MCF 10A (cell line): ENCODE measurements at regions of chr19 and their contacts with region 1.

Region 1: GRCh38 chr19:39778763-39779162 is at the start of gene LEUTX:
- DNase-seq: no peak
- H3K4me3 Mint-ChIP-seq: no peak within 1 kb of the TSS
- H3K27ac Mint-ChIP-seq: no peak within 1 kb of the TSS
- H3K4me1 Mint-ChIP-seq: no peaks in the 10 kb centered on the region
- H3K27me3 Mint-ChIP-seq: peaks cover 76% of the 10 kb centered on the region
- CTCF ChIP-seq: no peak
- total RNA-seq, gene LEUTX: not detected in 2 replicates

Region 2: GRCh38 chr19:39765091-39766076 is 13.4 kb before region 1 on chr19:
- CTCF ChIA-PET with region 1: interaction called, 11 read pairs
- POLR2A ChIA-PET with region 1: interaction called, 3 read pairs
- intact Hi-C with region 1: no loop called
- DNase-seq: peak; percentile 66
- H3K4me3 Mint-ChIP-seq: no peak overlapping the region
- H3K27ac Mint-ChIP-seq: no peak overlapping the region
- H3K4me1 Mint-ChIP-seq: no peaks in the 10 kb centered on the region
- H3K27me3 Mint-ChIP-seq: peaks cover 24% of the 10 kb centered on the region
- CTCF ChIP-seq: peak; percentile 75